Posterior cingulate gyrus (tissue), 11 donors: ENCODE measurements at regions of chr17 and their contacts with region 1.

Region 1: DNA sequence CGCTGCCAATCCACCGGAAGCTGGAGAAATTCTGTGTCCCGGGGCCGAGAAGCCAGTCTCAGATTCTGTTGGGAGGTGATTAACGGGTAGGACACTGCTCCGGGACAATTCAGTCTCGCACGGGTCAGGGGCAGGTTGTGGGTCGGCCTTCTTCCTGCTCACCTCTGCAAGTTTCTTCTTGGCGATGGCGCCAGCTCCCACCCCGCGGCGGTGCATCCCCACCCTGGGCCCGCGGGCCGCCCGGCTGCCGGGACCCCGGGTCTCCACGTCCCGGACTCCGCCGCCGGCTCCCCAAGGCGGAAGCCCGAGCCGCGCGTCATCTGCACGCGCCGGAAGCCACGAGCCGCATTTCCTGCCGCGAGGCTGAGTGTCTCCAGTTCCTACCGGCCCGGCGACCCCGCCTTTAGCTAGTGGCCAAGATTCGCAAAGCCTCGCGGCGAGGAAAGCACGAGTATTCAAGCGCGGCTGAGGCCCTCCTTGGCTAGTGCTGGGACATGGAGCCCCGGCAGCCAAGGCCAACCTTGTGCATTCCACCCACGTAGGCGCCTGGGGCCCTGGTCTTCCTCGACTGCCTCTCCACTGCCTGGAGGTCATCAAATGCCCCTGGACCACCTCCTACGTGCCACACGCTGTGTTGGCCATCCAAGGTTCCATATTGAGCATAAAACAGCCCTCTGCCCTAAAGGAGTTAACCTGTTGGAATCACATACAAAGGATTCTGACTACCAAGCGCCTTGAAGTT is at the start of gene SNF8:
- DNase-seq: peak; percentile 87 to 99 (median 92)

Region 2: GRCh38 chr17:48678141-48678971 is 266.3 kb before region 1 on chr17:
- intact Hi-C with region 1: no loop called
- DNase-seq: peak; percentile 10 to 91 (median 56)

Region 3: GRCh38 chr17:48773245-48773644 is 171.4 kb before region 1 on chr17:
- intact Hi-C with region 1: no loop called
- DNase-seq: no peak

Region 4: DNA sequence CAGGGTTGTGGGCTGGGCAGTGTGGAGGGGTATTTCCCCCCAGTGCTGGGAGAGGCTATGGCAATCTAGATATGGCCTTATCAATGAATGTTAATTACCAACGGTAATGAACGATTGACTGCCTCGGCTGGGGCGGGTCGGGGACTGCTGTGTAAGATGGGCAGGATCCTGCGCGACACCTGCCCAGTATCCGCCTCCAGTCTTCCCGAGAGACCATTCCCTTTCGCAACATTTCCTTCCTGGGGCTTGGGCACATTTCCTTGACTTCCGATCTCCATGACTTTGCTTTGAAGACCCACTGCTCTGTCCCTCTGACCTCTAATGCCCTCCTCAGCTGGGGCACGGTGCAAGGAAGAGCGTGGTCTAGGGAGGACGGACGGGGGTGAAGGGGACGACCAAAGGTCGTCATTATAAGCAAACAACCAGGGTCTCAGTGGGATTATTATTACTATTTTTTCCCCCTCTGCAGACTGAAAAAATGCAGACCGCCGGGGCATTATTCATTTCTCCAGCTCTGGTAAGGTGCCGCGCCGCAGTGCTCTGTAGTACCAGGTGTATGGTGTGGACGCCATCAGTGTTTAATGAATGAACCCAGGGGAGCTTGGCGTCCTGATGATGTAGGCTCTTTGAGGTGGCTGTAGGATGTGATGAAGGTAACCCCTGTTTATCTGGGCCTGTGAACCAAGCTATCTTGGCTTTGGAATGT is 51.6 kb before region 1 on chr17:
- intact Hi-C with region 1: loop called (anchors 10 kb)
- DNase-seq: no peak

Region 5: GRCh38 chr17:48908047-48908843 is 36.4 kb before region 1 on chr17 and contains the start of gene UBE2Z:
- intact Hi-C with region 1: loop called (anchors 2 kb)
- DNase-seq: peak; percentile 87 to 99 (median 94)

Region 6: DNA sequence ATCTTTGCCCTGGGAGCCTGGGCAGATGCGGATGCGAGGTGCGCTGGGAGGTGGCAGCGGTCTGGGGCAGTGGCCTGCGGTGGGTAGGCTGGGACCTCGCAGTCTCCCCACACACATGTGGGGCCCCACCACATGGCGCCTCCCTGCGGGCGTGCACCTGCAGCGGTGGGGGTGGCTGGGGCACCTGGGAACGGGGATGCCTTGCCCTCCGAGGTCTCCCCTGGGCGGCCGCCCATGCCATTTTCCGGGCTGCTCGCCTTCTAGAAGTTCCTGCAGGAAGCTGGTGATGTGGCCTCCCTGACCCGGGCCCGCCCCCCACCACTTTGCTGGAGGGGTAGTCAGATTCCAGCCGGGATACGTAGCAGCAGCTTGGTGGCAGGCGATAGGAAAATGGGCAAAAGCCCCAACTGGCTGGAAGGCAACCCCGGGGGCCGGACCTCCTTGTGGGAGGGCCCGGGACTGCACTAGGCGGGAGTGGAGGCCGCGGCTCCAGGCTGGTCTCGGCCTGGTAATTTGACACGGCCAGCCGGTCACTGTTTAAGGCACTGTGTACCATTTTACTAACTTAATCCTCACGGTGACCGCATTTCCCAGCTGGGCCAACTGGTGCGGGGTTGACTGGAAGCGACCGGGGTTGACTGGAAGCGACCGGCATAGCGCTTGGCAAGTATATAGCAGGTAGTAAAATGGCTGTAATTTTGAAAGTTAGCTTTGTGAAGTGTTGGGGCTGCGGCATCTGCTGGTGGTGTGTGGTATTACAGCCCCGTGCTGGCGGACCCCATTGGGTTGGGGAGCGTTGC is 91.0 kb after region 1 on chr17:
- intact Hi-C with region 1: no loop called
- DNase-seq: no peak